Heart right ventricle (tissue), 16 donors: ENCODE measurements at regions of chr11 and their contacts with region 1.

Region 1: GRCh38 chr11:132114185-132114584 is 743.8 kb downstream of the NTM start:
- DNase-seq: peak in 1 of 2 donors; percentile 21
- ATAC-seq: peak in 5 of 8 donors; percentile 30 to 80 (median 53)
- H3K4me3 ChIP-seq: no peak overlapping the region
- H3K27ac ChIP-seq: no peak overlapping the region
- H3K4me1 ChIP-seq: peaks cover 0 to 6% (median 0%) of the 10 kb centered on the region in 9 donors
- H3K27me3 ChIP-seq: peaks cover 0 to 15% (median 4%) of the 10 kb centered on the region in 7 donors
- CTCF ChIP-seq: peak in 8 of 9 donors; percentile 13 to 61 (median 54)

Region 2: GRCh38 chr11:131734871-131735270 is 379.3 kb before region 1 on chr11:
- intact Hi-C with region 1: no loop called
- DNase-seq: no peak
- ATAC-seq: no peak
- H3K4me3 ChIP-seq: no peak overlapping the region
- H3K27ac ChIP-seq: no peak overlapping the region
- H3K4me1 ChIP-seq: no peaks in the 10 kb centered on the region
- H3K27me3 ChIP-seq: peaks cover 0 to 33% (median 19%) of the 10 kb centered on the region in 7 donors
- CTCF ChIP-seq: no peak

Region 3: DNA sequence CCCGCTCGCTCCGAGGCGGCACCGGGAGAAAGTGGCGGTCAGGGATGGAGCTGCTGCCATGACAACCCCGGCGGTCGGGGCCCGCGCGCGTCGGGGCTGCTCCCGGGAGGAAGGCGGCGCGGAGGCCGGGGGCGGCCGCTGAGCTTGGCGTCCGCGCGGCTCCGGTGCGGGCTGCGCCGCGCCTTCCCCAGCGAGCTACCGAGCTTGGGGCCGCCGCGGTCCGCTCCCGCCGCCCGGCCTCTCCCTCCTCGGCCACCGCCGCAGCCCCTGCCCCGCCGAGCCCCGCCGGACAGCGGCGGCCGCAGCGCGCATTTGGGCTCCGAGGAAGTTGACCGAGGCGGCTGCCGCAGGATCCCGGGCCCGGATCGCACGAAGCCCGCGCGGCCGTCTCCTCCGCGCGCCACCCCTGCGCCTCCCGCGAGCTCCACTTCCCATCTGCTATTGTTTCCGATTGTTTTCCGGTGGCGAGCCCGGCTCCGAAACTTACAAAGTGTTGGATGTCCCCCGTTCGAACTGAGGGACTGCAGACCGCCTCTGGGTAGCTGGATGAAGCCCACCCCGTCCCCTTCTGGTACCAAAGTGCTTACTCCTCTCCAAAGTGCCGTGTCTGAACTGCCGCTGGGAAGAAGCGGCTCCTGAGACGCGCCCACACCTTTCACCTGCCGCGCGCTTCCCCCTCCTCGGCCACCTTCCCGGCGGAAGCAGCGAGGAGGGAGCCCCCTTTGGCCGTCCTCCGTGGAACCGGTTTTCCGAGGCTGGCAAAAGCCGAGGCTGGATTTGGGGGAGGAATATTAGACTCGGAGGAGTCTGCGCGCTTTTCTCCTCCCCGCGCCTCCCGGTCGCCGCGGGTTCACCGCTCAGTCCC is 203.4 kb before region 1 on chr11:
- intact Hi-C with region 1: loop called in 1 of 10 experiments (anchors 5 kb)
- DNase-seq: no peak
- ATAC-seq: peak in 4 of 8 donors; percentile 9 to 70 (median 24)
- H3K4me3 ChIP-seq: peak overlapping the region in 9 of 10 donors; percentile 31 to 53 (median 51)
- H3K27ac ChIP-seq: peak overlapping the region in 5 of 10 donors; percentile 1 to 75 (median 39)
- H3K4me1 ChIP-seq: peaks cover 0 to 5% (median 0%) of the 10 kb centered on the region in 9 donors
- H3K27me3 ChIP-seq: peaks cover 0 to 87% (median 64%) of the 10 kb centered on the region in 7 donors
- CTCF ChIP-seq: no peak

Region 4: GRCh38 chr11:132300283-132300682 is 186.1 kb after region 1 on chr11:
- intact Hi-C with region 1: loop called in 1 of 10 experiments (anchors 10 kb)
- DNase-seq: no peak
- ATAC-seq: no peak
- H3K4me3 ChIP-seq: no peak overlapping the region
- H3K27ac ChIP-seq: no peak overlapping the region
- H3K4me1 ChIP-seq: no peaks in the 10 kb centered on the region
- H3K27me3 ChIP-seq: no peaks in the 10 kb centered on the region
- CTCF ChIP-seq: peak in 6 of 9 donors; percentile 6 to 39 (median 26)

Region 5: GRCh38 chr11:132312701-132313111 is 198.5 kb after region 1 on chr11:
- intact Hi-C with region 1: loop called in 2 of 10 experiments (anchors 10 kb)
- DNase-seq: no peak
- ATAC-seq: peak in 6 of 8 donors; percentile 30 to 61 (median 42)
- H3K4me3 ChIP-seq: no peak overlapping the region
- H3K27ac ChIP-seq: no peak overlapping the region
- H3K4me1 ChIP-seq: peaks cover 0 to 12% (median 0%) of the 10 kb centered on the region in 9 donors
- H3K27me3 ChIP-seq: no peaks in the 10 kb centered on the region
- CTCF ChIP-seq: peak; percentile 33 to 64 (median 58)

Region 6: GRCh38 chr11:132330515-132330914 is 216.3 kb after region 1 on chr11:
- intact Hi-C with region 1: no loop called
- DNase-seq: no peak
- ATAC-seq: no peak
- H3K4me3 ChIP-seq: no peak overlapping the region
- H3K27ac ChIP-seq: no peak overlapping the region
- H3K4me1 ChIP-seq: no peaks in the 10 kb centered on the region
- H3K27me3 ChIP-seq: no peaks in the 10 kb centered on the region
- CTCF ChIP-seq: no peak

Region 7: GRCh38 chr11:132402071-132402684 is 288.0 kb after region 1 on chr11:
- intact Hi-C with region 1: loop called in 8 of 10 experiments (anchors 2 to 10 kb)
- DNase-seq: peak; percentile 13 to 17
- ATAC-seq: peak in 7 of 8 donors; percentile 49 to 89 (median 75)
- H3K4me3 ChIP-seq: no peak overlapping the region
- H3K27ac ChIP-seq: no peak overlapping the region
- H3K4me1 ChIP-seq: no peaks in the 10 kb centered on the region
- H3K27me3 ChIP-seq: peaks cover 0 to 59% (median 29%) of the 10 kb centered on the region in 7 donors
- CTCF ChIP-seq: peak; percentile 10 to 60 (median 44)

Region 8: DNA sequence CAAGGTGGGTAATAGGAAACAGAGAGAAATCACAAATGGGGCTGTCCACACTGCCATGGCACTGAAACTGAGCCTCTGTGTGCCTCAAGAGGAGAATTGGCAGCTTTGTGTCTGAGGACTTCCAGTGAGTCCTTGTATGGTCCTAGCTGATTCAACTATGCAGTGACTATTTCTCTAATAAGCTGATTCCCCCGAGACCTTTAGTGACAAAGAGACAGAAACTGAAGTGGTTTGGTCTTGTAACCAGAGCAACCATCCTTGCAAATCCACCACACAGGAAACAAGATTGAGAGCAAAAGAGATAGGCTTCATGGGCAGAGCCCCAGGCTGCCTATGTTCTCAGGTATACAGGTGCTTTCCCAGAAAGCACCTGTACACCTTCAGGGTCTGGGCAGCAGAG is 294.7 kb after region 1 on chr11:
- intact Hi-C with region 1: loop called in 7 of 10 experiments (anchors 5 to 10 kb)
- DNase-seq: no peak
- ATAC-seq: no peak
- H3K4me3 ChIP-seq: no peak overlapping the region
- H3K27ac ChIP-seq: no peak overlapping the region
- H3K4me1 ChIP-seq: no peaks in the 10 kb centered on the region
- H3K27me3 ChIP-seq: peaks cover 0 to 40% (median 17%) of the 10 kb centered on the region in 7 donors
- CTCF ChIP-seq: no peak